ENCODE measurements at regions of chr6 and their contacts with region 1.

Region 1: GRCh38 chr6:54267798-54268197 is 40.4 kb upstream of the TINAG start:
- DNase-seq: no peak
- H3K4me3 ChIP-seq: no peak overlapping the region
- H3K27ac ChIP-seq: no peak overlapping the region
- H3K4me1 ChIP-seq: peaks cover 0 to 7% (median 0%) of the 10 kb centered on the region in 4 experiments; a peak in 1 of 7 replicates
- H3K27me3 ChIP-seq: no peaks in the 10 kb centered on the region
- CTCF ChIP-seq: peak in 2 of 3 experiments; percentile 38 to 46; a peak in 3 of 4 replicates
- EP300 ChIP-seq: no peak
- POLR2A ChIP-seq: no peak
- RAD21 ChIP-seq: peak; percentile 50 to 63

Region 2: DNA sequence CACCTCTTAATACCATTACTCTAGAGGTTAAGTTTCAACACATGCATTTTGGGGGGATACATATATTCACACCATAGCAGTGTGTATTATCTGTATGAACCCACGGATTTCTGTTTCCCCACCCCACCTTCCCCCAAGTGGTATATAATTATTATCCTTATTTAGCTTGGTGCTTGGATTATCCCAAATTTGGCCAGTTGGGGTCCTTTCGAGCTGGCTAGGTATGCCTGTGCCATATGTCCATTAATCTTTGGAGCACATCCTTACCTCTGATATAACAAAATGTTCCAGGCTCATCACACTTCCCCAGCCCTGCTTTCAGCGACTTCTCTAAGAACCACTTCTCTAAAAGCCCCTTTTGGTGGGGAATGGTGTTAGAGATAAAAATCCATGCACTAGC is 275.3 kb before region 1 on chr6:
- CTCF ChIA-PET with region 1: interaction called, 100 read pairs
- POLR2A ChIA-PET with region 1: no interaction called
- DNase-seq: no peak
- H3K4me3 ChIP-seq: no peak overlapping the region
- H3K27ac ChIP-seq: no peak overlapping the region
- H3K4me1 ChIP-seq: peaks cover 0 to 2% (median 0%) of the 10 kb centered on the region in 4 experiments; a peak in 2 of 7 replicates
- H3K27me3 ChIP-seq: no peaks in the 10 kb centered on the region
- CTCF ChIP-seq: no peak
- EP300 ChIP-seq: no peak
- POLR2A ChIP-seq: no peak
- RAD21 ChIP-seq: no peak; a peak in 2 of 4 replicates

Region 3: GRCh38 chr6:54031169-54031568 is 236.6 kb before region 1 on chr6:
- CTCF ChIA-PET with region 1: no interaction called
- POLR2A ChIA-PET with region 1: no interaction called
- DNase-seq: no peak
- H3K4me3 ChIP-seq: no peak overlapping the region
- H3K27ac ChIP-seq: no peak overlapping the region
- H3K4me1 ChIP-seq: no peaks in the 10 kb centered on the region
- H3K27me3 ChIP-seq: no peaks in the 10 kb centered on the region
- CTCF ChIP-seq: no peak
- EP300 ChIP-seq: no peak
- POLR2A ChIP-seq: no peak
- RAD21 ChIP-seq: no peak

Region 4: DNA sequence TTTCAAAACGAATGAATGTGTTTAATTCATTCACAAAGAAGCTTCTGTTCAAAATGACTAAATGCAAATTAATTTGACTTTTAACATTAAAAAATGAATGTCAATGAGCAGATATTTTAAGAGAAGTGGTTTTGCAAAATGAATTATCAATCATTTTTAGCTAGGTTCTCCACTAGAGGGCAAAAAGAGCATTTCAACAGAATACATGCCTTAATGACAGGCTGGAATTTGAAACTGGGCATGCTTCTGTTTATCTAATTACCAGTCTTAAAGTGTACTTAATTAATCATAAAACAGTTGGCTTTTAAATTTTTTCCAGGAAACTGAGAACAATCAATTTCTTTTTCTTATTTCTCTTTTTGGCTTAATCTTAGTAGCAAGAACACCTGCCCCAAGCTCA is 23.4 kb before region 1 on chr6:
- CTCF ChIA-PET with region 1: interaction called, 31 read pairs
- POLR2A ChIA-PET with region 1: no interaction called
- DNase-seq: no peak
- H3K4me3 ChIP-seq: no peak overlapping the region
- H3K27ac ChIP-seq: no peak overlapping the region
- H3K4me1 ChIP-seq: no peaks in the 10 kb centered on the region
- H3K27me3 ChIP-seq: no peaks in the 10 kb centered on the region
- CTCF ChIP-seq: peak in 2 of 3 experiments; percentile 26 to 51; a peak in 2 of 4 replicates
- EP300 ChIP-seq: no peak
- POLR2A ChIP-seq: no peak
- RAD21 ChIP-seq: peak; percentile 38 to 43

Region 5: DNA sequence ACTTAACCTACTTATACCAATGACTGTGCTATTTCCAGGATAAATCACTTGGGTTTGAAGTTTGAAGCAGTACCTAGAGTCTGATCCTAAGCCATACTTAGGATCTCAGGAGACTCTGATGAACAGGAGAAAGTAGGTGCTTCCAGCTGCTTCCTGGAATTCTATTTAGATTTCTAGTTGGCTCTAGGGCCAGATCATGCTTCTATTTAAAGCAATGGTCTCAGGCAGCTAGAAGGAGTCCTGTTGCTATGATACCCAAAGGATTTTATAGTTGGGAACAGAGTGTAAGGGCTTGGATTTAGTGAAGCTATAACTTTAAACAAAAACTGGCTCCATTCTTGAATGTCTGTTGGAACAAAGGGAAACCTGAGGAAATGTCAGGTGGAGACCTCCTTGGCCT is 11.9 kb before region 1 on chr6:
- CTCF ChIA-PET with region 1: interaction called, 22 read pairs
- POLR2A ChIA-PET with region 1: no interaction called
- DNase-seq: no peak
- H3K4me3 ChIP-seq: no peak overlapping the region
- H3K27ac ChIP-seq: no peak overlapping the region
- H3K4me1 ChIP-seq: peaks cover 0 to 3% (median 0%) of the 10 kb centered on the region in 4 experiments; a peak in 1 of 7 replicates
- H3K27me3 ChIP-seq: no peaks in the 10 kb centered on the region
- CTCF ChIP-seq: no peak
- EP300 ChIP-seq: no peak
- POLR2A ChIP-seq: no peak
- RAD21 ChIP-seq: no peak

Measured in H1 (cell line).